Activated CD8-positive, alpha-beta T cell treated with anti-CD3 and anti-CD28 coated beads for 36 hours (primary cell): ENCODE measurements at regions of chr17 and their contacts with region 1.

Region 1: DNA sequence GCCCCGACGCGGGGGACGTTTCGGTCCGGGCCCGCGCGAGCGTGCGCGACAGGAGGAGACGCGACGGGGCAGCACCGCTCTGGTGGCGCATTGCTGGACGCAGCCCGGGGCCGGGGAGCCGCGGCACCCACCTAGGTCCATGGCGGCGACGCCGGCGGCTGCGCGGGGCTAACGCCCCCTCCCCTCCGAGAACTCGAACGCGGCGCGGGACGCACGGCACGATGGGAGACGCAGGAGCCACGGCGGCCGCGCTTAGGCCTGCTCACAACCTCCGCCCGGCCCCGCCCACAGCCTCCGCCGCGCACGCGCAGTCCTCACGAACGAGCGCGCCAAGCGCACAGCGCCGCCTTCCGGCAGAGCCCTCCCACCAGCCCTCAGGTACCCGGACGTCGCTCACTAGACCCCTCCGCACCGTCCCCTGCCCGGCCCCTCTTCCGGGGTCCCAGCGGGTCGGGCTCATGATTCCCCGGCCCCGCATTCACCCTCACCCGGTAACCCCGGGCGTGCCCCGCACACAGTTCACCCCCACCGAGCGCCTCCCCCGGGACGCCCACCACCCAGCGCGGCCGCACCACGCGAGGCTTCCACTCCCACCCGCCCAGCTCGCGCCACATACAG is at the start of gene GEMIN4:
- DNase-seq: peak; percentile 96
- ATAC-seq: peak; percentile 90
- H3K4me3 Mint-ChIP-seq: peak within 1 kb of the TSS; percentile 90
- H3K27ac Mint-ChIP-seq: peak within 1 kb of the TSS; percentile 95
- H3K4me1 Mint-ChIP-seq: peaks cover 32% of the 10 kb centered on the region
- H3K27me3 Mint-ChIP-seq: no peaks in the 10 kb centered on the region
- CTCF ChIP-seq: peak; percentile 94
- total RNA-seq, gene GEMIN4: 52.8 to 55.8 TPM

Region 2: GRCh38 chr17:732067-732901 is 19.8 kb before region 1 on chr17 and contains the start of gene TLCD3A:
- CTCF ChIA-PET with region 1: no interaction called
- POLR2A ChIA-PET with region 1: interaction called, 11 read pairs
- intact Hi-C with region 1: no loop called
- DNase-seq: peak; percentile 64
- ATAC-seq: peak; percentile 72
- H3K4me3 Mint-ChIP-seq: peak within 1 kb of the TSS; percentile 93
- H3K27ac Mint-ChIP-seq: peak within 1 kb of the TSS; percentile 90
- H3K4me1 Mint-ChIP-seq: peaks cover 17% of the 10 kb centered on the region
- H3K27me3 Mint-ChIP-seq: no peaks in the 10 kb centered on the region
- CTCF ChIP-seq: no peak
- total RNA-seq, gene TLCD3A: 30.9 to 34.4 TPM

Region 3: GRCh38 chr17:740240-741017 is 11.7 kb before region 1 on chr17:
- CTCF ChIA-PET with region 1: interaction called, 4 read pairs
- POLR2A ChIA-PET with region 1: interaction called, 33 read pairs
- intact Hi-C with region 1: no loop called
- DNase-seq: peak; percentile 56
- ATAC-seq: peak; percentile 82
- H3K4me3 Mint-ChIP-seq: peak overlapping the region; percentile 16
- H3K27ac Mint-ChIP-seq: peak overlapping the region; percentile 78
- H3K4me1 Mint-ChIP-seq: peaks cover 23% of the 10 kb centered on the region
- H3K27me3 Mint-ChIP-seq: no peaks in the 10 kb centered on the region
- CTCF ChIP-seq: no peak

Region 4: DNA sequence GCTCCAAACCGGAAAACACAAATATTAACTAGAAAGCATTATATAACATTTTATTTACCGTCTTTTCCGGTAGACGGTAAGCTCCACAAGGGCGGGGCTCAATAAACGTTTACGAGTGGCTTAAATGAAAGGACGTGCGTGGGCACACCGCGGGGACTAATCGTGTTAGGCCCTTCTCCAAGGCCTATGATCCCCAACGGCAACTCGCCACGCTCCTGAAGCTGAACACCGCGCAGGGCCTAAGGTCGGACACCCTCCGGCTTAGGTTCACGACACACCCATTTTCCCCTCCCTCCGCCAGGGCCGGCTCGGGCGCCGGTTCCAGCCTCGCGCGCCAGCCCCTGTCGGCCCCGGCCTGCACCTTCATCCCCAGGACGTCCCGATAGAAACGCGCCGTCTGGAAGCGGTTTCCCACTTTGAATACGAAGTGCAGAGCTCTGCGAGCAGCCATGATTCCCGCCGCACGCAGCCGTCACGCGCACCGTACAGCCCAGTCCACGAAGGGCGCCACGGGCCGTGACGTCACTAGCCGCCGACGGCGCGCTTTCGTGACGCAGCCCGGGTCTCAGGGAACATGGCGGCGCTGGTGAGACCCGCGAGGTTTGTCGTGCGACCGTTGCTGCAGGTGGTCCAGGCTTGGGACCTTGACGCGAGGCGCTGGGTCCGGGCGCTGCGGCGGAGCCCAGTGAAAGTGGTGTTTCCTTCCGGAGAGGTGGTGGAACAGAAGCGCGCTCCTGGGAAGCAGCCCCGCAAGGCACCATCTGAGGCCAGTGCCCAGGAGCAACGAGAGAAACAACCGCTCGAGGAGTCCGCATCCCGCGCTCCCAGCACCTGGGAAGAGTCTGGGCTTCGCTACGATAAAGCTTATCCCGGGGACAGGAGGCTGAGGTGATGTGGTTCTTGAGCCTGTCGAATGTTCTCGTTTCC is 30.0 kb after region 1 on chr17 and contains the starts of genes GLOD4 and MRM3:
- CTCF ChIA-PET with region 1: interaction called, 9 read pairs
- POLR2A ChIA-PET with region 1: interaction called, 34 read pairs
- intact Hi-C with region 1: no loop called
- DNase-seq: peak; percentile 96
- ATAC-seq: peak; percentile 95
- H3K4me3 Mint-ChIP-seq: peak within 1 kb of the TSS; percentile 89
- H3K27ac Mint-ChIP-seq: peak within 1 kb of the TSS; percentile 96
- H3K4me1 Mint-ChIP-seq: peaks cover 32% of the 10 kb centered on the region
- H3K27me3 Mint-ChIP-seq: no peaks in the 10 kb centered on the region
- CTCF ChIP-seq: peak; percentile 15
- total RNA-seq, gene GLOD4: 47.3 to 55.2 TPM
- total RNA-seq, gene MRM3: 35.5 to 36.2 TPM